Heart left ventricle (tissue), 16 donors: ENCODE measurements at regions of chr11 and their contacts with region 1.

Region 1: DNA sequence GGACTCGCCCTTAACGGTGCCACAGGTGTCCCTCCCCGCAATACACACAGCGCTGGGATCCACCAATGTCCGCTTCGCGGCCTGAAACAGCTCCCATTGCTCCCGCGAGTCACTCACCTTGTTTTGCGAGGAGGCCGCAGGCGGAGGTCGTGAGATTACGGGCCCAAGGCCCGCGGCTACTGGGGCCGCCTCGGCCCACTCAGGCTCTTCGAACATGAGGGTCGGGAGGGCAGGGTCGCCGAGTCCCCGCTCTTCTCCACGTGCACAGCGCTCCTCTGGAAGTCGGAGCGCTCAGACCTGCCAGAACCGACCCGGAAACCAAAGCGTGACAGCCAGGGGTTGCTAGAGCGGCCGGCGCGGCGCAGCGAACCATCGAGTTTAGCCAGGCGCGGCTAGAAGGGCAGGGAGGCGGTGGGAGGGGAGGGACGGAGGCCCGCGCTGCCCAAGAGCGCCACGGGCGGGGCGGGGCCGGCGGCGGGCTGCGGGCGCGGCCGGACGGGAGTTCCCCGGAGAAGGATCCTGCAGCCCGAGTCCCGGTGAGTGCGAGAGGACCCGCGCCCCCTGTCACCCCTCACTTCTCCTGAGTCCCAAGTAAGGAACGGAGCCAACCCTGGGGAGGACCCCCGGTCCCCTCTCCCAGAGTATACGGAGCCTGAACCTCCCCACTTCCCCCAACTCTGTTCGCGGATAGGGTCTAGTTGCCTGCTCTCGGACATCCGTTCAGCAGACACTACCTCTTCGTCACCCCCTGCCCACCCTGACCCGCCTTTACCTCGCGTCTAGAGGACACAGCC is at the starts of genes ILK and RRP8:
- DNase-seq: peak; percentile 94 to 96 (median 95)
- ATAC-seq: peak; percentile 73 to 92 (median 90)
- H3K4me3 ChIP-seq: peak within 1 kb of the TSS; percentile 52 to 97 (median 92)
- H3K27ac ChIP-seq: peak within 1 kb of the TSS; percentile 83 to 99 (median 98)
- H3K4me1 ChIP-seq: peaks cover 17 to 80% (median 58%) of the 10 kb centered on the region in 12 donors
- H3K27me3 ChIP-seq: no peaks in the 10 kb centered on the region
- CTCF ChIP-seq: peak in 8 of 12 donors; percentile 8 to 63 (median 38)
- POLR2A ChIP-seq: peak; percentile 54 to 86
- total RNA-seq, gene ILK: 177 to 259 (median 222) TPM
- total RNA-seq, gene RRP8: 11.2 to 23.5 (median 18.0) TPM

Region 2: DNA sequence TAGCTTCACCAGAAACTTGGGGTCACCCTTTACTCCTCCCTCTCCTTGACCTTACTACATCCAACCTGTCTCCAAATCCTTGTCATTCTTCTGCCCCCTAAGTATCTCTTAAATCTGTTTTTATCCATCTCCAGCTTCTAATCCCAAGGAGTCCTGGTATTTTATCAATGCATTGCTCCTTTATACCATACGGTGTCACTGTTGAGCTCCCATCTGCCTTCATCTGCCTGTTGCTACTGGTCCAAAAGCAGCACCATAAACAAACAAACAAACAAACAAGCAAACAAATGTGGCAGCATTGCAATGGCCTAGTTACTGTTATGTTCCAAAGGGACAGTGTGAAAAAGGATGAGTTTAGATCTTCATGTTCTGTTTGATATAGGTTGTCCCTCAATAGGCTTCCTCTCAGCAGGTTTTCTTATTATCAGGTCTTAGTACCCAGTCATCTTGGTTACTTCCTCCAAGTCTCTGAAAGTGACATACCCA is 72.2 kb before region 1 on chr11:
- intact Hi-C with region 1: loop called in 5 of 10 experiments (anchors 5 to 10 kb)
- DNase-seq: no peak
- ATAC-seq: peak in 3 of 4 donors; percentile 49 to 55 (median 54)
- H3K4me3 ChIP-seq: no peak overlapping the region
- H3K27ac ChIP-seq: no peak overlapping the region
- H3K4me1 ChIP-seq: no peaks in the 10 kb centered on the region
- H3K27me3 ChIP-seq: no peaks in the 10 kb centered on the region
- CTCF ChIP-seq: peak; percentile 65 to 86 (median 79)
- POLR2A ChIP-seq: no peak

Region 3: GRCh38 chr11:6556139-6556949 is 47.1 kb before region 1 on chr11:
- intact Hi-C with region 1: loop called in 1 of 10 experiments (anchors 5 kb)
- DNase-seq: no peak
- ATAC-seq: no peak
- H3K4me3 ChIP-seq: no peak overlapping the region
- H3K27ac ChIP-seq: no peak overlapping the region
- H3K4me1 ChIP-seq: peaks cover 0 to 18% (median 0%) of the 10 kb centered on the region in 12 donors
- H3K27me3 ChIP-seq: no peaks in the 10 kb centered on the region
- CTCF ChIP-seq: no peak
- POLR2A ChIP-seq: no peak

Region 4: DNA sequence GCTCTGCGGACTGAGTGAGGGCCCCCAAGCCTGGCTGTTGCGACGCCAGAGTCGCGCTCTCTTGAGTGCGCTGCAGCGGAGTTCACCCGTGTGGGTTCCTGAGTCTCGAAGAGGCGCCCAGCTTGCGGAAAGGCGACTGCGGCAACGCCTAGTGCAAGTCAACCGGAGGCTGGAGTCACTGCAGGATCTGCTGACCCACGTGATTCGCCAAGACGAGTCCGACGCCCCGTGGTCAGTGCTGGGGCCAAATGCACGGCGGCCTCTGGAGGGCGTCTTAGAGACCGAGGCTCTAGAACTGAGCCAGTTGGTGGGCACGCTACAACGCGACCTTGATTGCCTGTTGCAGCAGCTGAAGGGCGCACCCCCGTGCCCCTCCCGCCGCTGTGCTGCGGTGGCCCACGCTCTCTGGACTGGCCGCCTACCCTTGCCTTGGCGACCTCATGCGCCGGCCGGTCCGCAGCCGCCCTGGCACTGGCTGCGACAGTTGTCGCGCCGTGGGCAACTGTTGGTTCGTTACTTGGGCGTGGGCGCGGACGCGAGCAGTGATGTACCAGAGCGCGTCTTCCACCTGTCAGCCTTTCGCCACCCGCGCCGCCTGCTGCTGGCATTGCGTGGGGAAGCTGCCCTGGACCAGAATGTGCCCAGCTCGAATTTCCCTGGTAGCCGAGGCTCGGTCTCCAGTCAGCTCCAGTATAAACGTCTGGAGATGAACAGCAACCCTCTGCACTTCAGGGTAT is 32.6 kb before region 1 on chr11:
- intact Hi-C with region 1: loop called in 1 of 10 experiments (anchors 1 kb)
- DNase-seq: no peak
- ATAC-seq: peak in 1 of 4 donors; percentile 4
- H3K4me3 ChIP-seq: peak overlapping the region in 6 of 12 donors; percentile 15 to 36 (median 24)
- H3K27ac ChIP-seq: no peak overlapping the region
- H3K4me1 ChIP-seq: peaks cover 0 to 24% (median 10%) of the 10 kb centered on the region in 12 donors
- H3K27me3 ChIP-seq: no peaks in the 10 kb centered on the region
- CTCF ChIP-seq: peak in 1 of 12 donors; percentile 8
- POLR2A ChIP-seq: no peak

Region 5: DNA sequence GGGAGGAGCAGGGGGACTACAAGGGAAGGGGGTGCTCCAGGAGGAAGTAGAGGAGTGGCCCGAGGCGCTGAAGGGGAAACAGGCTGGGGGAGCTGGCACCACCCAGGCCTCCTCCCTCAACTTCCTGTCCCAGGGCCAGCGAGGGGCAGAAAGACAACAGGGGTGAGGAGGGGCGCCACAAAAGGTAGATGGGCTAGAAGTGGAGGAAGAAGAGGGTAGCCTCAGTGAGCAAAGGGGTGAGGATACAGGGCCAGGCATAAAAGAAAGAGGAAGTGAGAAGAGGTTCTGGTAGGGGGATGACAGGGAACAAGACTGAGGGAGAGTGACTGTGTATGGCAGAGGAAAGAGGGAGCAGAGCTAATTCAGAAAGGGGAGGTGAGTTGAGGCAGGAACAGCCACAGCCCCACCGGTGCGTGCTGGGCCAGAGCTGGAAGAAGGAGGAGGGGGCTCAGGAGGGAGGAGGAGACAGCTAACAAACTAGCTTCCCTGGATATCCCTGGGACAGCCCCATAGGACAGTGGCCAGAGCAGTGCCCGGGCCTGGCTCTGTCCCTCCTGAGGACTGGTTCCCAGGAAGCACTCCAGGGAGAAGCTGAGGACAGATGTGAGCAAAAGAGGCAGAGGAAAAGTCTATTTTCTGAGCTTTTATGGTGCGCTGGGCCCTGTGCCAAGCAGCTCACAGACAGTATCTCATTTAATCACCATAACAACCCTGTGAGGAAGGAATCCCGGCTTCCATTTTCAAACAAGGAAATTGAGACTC is 43.6 kb after region 1 on chr11:
- intact Hi-C with region 1: loop called in 1 of 10 experiments (anchors 2 kb)
- DNase-seq: peak; percentile 18 to 79 (median 58)
- ATAC-seq: peak; percentile 10 to 45 (median 42)
- H3K4me3 ChIP-seq: peak overlapping the region in 6 of 12 donors; percentile 6 to 39 (median 20)
- H3K27ac ChIP-seq: peak overlapping the region; percentile 59 to 92 (median 84)
- H3K4me1 ChIP-seq: peaks cover 0 to 64% (median 37%) of the 10 kb centered on the region in 12 donors
- H3K27me3 ChIP-seq: peaks cover 0 to 3% (median 0%) of the 10 kb centered on the region in 9 donors
- CTCF ChIP-seq: no peak
- POLR2A ChIP-seq: no peak